Dendritic cell treated with granulocyte-macrophage colony-stimulating factor and Interleukin-4, amounts not matched to agents 40 ng/mL and 50 ng/mL, for 4 days (primary cell): ENCODE measurements at regions of chr4 and their contacts with region 1.

Region 1: DNA sequence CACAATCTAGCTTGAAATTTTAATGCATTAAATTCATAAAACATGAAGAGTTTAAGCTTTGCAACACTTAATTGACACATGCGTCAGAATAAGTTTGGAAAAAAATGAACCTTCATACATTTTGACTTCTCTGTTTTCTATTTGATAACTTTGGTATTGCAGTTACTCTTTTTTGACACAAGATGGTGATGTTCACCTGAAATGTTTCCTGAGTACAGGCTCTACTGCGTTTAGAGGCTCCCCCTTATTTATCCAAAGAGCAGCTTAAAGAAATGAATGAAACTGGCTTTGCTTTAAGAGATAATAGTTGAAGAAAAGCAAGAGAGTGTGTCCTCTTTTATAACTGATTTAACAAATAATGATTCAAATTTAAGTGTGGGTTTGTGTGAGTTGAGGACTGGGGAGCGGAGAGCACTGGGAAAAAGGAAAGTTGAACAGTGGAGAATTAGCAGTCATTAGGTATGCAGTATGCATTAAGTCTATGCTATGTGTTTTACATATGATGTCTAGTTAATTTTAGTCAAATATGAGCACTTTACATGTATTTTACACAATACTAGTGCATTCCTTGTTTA is 180.6 kb upstream of the NUDT6 start:
- H3K4me3 Mint-ChIP-seq: no peak overlapping the region
- H3K27ac Mint-ChIP-seq: no peak overlapping the region
- H3K4me1 Mint-ChIP-seq: no peaks in the 10 kb centered on the region
- H3K27me3 Mint-ChIP-seq: no peaks in the 10 kb centered on the region

Region 2: GRCh38 chr4:123390846-123391456 is 288.0 kb after region 1 on chr4:
- intact Hi-C with region 1: loop called (anchors 5 kb)
- H3K4me3 Mint-ChIP-seq: no peak overlapping the region
- H3K27ac Mint-ChIP-seq: no peak overlapping the region
- H3K4me1 Mint-ChIP-seq: peaks cover 6% of the 10 kb centered on the region
- H3K27me3 Mint-ChIP-seq: no peaks in the 10 kb centered on the region

Region 3: DNA sequence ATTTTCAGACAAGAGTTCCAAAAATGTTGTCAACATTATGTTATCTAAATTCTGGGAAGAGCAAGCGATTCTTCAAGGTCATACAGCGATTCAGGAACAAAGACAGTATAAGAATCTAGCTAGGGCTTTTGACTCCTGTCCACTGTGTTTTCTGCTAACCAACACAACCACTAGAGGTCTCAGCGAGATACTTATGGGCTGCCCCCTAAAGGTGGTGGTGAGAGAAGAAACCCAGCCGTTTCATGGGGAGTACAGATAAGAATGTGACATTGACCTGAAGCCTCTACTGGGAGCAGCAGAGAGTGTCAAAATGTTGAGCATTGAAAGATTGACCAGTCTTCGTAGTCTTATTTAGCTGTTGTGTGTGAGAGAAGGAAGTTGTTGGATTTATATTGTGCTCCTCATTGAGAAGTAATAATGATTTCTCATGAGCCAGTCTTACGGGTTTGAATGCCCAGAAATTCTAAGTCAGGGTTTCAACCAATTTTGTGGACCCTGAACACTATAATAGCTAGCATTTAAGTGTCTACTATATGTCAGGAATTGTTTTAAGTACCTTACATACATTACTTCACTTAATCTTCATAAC is 461.9 kb after region 1 on chr4:
- intact Hi-C with region 1: loop called (anchors 5 kb)
- H3K4me3 Mint-ChIP-seq: no peak overlapping the region
- H3K27ac Mint-ChIP-seq: no peak overlapping the region
- H3K4me1 Mint-ChIP-seq: peaks cover 5% of the 10 kb centered on the region
- H3K27me3 Mint-ChIP-seq: no peaks in the 10 kb centered on the region

Region 4: DNA sequence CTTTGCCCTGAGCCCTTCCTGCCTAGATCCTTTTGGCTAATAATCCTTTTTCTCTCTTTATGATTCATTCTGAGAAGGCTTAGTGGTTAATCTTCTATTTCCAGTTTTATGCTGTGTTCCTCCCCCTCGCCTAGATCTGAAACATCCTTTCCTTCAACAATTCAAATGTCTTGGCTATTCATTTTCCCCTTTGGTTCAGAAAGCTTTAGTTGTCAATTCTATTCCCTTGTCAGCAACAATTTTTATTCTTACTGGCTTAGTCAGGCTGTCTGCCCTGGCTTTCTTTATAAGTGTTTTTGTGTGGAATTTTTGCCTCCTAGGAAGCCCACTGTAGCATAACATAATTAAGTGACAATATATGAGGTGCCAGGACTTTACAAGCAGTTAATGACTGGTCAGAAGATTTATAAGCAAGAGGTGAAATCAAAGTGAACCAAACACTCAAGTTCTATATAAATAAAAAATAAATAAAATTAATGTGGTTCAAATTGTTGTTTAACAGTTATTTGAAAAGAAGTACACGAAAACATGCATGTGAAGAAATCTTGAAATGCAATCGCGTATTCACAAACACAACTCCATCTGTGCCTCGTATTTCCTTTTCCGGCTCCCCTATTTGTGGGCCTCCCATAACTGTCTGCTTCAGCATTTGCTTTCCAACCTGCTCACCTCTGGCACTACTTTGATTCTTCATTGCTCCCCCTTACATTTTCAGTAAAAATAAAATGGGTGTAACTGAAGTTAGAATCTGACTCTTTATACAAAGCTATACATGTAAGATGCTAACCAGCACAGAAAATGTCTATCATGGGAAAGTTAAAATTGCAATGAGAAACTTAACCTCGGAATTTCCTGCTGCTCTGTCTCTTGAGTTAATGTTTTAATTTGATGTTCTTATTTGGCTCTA is 529.1 kb after region 1 on chr4:
- intact Hi-C with region 1: no loop called
- H3K4me3 Mint-ChIP-seq: no peak overlapping the region
- H3K27ac Mint-ChIP-seq: no peak overlapping the region
- H3K4me1 Mint-ChIP-seq: no peaks in the 10 kb centered on the region
- H3K27me3 Mint-ChIP-seq: peaks cover 1% of the 10 kb centered on the region

Region 5: GRCh38 chr4:123661080-123661737 is 558.2 kb after region 1 on chr4:
- intact Hi-C with region 1: loop called (anchors 2 kb)
- H3K4me3 Mint-ChIP-seq: no peak overlapping the region
- H3K27ac Mint-ChIP-seq: no peak overlapping the region
- H3K4me1 Mint-ChIP-seq: no peaks in the 10 kb centered on the region
- H3K27me3 Mint-ChIP-seq: peaks cover 12% of the 10 kb centered on the region

Region 6: GRCh38 chr4:124262211-124263179 is 1159.5 kb after region 1 on chr4:
- intact Hi-C with region 1: loop called (anchors 2 kb)
- H3K4me3 Mint-ChIP-seq: no peak overlapping the region
- H3K27ac Mint-ChIP-seq: no peak overlapping the region
- H3K4me1 Mint-ChIP-seq: no peaks in the 10 kb centered on the region
- H3K27me3 Mint-ChIP-seq: no peaks in the 10 kb centered on the region

Region 7: GRCh38 chr4:124322234-124323065 is 1219.5 kb after region 1 on chr4:
- intact Hi-C with region 1: loop called (anchors 5 kb)
- H3K4me3 Mint-ChIP-seq: no peak overlapping the region
- H3K27ac Mint-ChIP-seq: no peak overlapping the region
- H3K4me1 Mint-ChIP-seq: no peaks in the 10 kb centered on the region
- H3K27me3 Mint-ChIP-seq: no peaks in the 10 kb centered on the region